Dendritic cell treated with granulocyte-macrophage colony-stimulating factor and Interleukin-4, amounts not matched to agents 40 ng/mL and 50 ng/mL, for 4 days (primary cell): ENCODE measurements at regions of chr2 and their contacts with region 1.

Region 1: DNA sequence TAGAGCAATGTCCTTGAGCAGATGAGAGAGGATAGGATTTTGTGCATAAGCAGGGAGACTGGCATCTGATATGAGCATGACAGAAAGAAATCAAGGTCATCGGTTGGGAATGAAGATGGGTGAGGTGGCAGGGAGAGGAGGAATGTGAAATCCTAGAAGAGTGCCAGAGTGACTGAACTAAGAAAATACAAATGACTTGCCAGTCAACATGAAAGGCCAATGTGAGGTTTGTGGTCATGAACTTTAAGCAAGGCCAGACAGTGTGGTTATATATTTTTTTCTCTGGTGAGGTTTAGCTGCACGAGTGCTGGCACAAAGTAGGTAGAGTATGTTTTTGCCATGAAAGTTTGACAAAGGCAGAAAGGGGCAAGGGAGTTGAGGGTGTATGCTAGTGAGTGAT is 21.2 kb downstream of the QPCT start:
- H3K4me3 Mint-ChIP-seq: no peak overlapping the region
- H3K27ac Mint-ChIP-seq: no peak overlapping the region
- H3K4me1 Mint-ChIP-seq: peaks cover 19% of the 10 kb centered on the region
- H3K27me3 Mint-ChIP-seq: no peaks in the 10 kb centered on the region

Region 2: GRCh38 chr2:36478332-36478738 is 887.3 kb before region 1 on chr2:
- intact Hi-C with region 1: no loop called
- H3K4me3 Mint-ChIP-seq: no peak overlapping the region
- H3K27ac Mint-ChIP-seq: peak overlapping the region; percentile 80
- H3K4me1 Mint-ChIP-seq: peaks cover 28% of the 10 kb centered on the region
- H3K27me3 Mint-ChIP-seq: no peaks in the 10 kb centered on the region

Region 3: DNA sequence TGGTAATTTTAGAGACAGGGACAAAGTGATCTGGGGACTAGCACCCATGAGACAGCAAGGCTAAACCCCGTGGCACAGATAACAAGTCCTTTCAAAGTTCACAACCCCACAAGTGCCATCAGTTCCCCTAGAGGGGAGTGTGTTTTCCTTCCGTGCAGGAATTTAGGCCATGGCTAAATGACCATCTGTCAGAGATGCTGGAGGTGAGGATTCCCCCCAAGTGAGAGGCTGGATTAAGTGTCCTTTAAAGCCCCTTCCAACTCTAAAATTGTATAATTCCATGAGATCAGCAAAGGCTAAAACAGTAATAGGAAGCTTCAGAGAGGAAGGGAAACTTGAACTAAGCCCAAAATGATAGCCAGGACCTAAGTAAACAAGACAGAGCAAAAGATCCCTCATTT is 776.4 kb before region 1 on chr2:
- intact Hi-C with region 1: no loop called
- H3K4me3 Mint-ChIP-seq: no peak overlapping the region
- H3K27ac Mint-ChIP-seq: peak overlapping the region; percentile 72
- H3K4me1 Mint-ChIP-seq: peaks cover 58% of the 10 kb centered on the region
- H3K27me3 Mint-ChIP-seq: no peaks in the 10 kb centered on the region

Region 4: DNA sequence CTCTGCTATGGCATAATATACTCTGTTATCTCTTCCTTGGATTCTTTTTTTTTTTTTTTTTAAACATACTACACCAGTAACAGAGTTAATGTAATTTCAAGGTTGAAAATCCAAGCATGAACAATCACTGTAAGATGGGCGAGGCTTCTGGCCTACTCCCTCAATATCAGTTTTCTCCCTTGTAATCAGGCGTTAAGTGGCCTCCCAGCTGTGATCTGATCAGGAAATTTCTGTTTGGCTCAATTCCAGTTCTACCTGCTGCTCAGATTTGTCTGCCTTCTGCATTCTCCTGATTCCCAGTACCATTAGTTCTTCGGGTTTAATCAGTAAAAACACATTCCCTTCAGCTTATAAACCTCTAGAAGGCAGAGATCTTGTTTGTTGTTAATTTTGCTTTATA is 59.6 kb before region 1 on chr2:
- intact Hi-C with region 1: loop called (anchors 10 kb)
- H3K4me3 Mint-ChIP-seq: no peak overlapping the region
- H3K27ac Mint-ChIP-seq: no peak overlapping the region
- H3K4me1 Mint-ChIP-seq: peaks cover 44% of the 10 kb centered on the region
- H3K27me3 Mint-ChIP-seq: no peaks in the 10 kb centered on the region

Region 5: GRCh38 chr2:37414470-37414949 is 48.8 kb after region 1 on chr2:
- intact Hi-C with region 1: no loop called
- H3K4me3 Mint-ChIP-seq: no peak overlapping the region
- H3K27ac Mint-ChIP-seq: no peak overlapping the region
- H3K4me1 Mint-ChIP-seq: no peaks in the 10 kb centered on the region
- H3K27me3 Mint-ChIP-seq: peaks cover 7% of the 10 kb centered on the region